H1 (cell line): ENCODE measurements at regions of chr17 and their contacts with region 1.

Region 1: GRCh38 chr17:59440784-59441441 is 109.5 kb downstream of the YPEL2 start:
- DNase-seq: peak; percentile 69 to 90
- H3K4me3 ChIP-seq: no peak overlapping the region
- H3K27ac ChIP-seq: no peak overlapping the region
- H3K4me1 ChIP-seq: peaks cover 0 to 5% (median 0%) of the 10 kb centered on the region in 4 experiments; a peak in 2 of 7 replicates
- H3K27me3 ChIP-seq: no peaks in the 10 kb centered on the region
- CTCF ChIP-seq: peak; percentile 47 to 94 (median 90)
- EP300 ChIP-seq: no peak
- POLR2A ChIP-seq: no peak
- RAD21 ChIP-seq: peak; percentile 89 to 96

Region 2: GRCh38 chr17:59331129-59331928 is 109.6 kb before region 1 on chr17 and contains the start of gene YPEL2:
- CTCF ChIA-PET with region 1: interaction called, 299 read pairs
- POLR2A ChIA-PET with region 1: no interaction called
- DNase-seq: peak; percentile 84 to 97
- H3K4me3 ChIP-seq: peak within 1 kb of the TSS; percentile 63 to 79 (median 66)
- H3K27ac ChIP-seq: no peak within 1 kb of the TSS
- H3K4me1 ChIP-seq: peaks cover 10 to 19% (median 14%) of the 10 kb centered on the region in 4 experiments; a peak in 6 of 7 replicates
- H3K27me3 ChIP-seq: peaks cover 1 to 22% (median 14%) of the 10 kb centered on the region in 4 experiments; a peak in 6 of 7 replicates
- CTCF ChIP-seq: no peak
- EP300 ChIP-seq: no peak
- POLR2A ChIP-seq: no peak
- RAD21 ChIP-seq: no peak
- total RNA-seq, gene YPEL2: 3.2 and 3.5 TPM in 2 replicates

Region 3: DNA sequence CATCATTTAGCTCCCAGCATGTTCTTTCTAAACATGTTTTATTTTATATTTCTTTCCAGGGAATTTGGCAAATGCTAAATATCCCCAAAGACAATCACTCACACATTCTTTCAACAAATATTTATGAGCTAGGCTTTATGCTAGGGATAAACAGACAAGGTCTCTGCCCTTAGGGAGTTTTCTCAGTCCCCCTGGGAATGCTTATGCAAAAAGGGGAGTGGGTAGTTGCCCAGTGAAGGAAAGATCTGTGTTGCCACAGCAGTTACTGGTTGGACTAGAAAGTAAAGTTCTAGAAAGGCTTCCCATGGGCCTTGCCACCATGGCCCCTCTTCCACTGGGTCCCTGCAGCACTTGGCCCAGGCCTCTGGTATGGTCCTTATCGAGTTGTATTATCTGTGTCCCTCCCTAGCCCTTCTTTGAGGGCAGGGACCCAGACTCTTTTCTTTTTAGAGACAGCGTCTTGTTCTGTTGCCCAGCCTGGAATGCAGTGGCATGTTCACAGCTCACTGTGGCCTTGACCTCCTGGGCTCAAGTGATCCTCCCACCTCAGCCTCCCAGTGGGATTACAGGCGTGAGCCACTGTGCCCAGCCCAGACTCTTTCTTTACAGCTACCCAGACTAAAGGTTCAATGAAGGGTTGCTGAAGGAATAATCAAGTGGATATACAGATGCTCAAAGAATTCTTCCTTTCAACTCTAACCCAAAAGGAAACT is 31.4 kb before region 1 on chr17:
- CTCF ChIA-PET with region 1: no interaction called
- POLR2A ChIA-PET with region 1: no interaction called
- DNase-seq: no peak
- H3K4me3 ChIP-seq: no peak overlapping the region
- H3K27ac ChIP-seq: no peak overlapping the region
- H3K4me1 ChIP-seq: no peaks in the 10 kb centered on the region
- H3K27me3 ChIP-seq: no peaks in the 10 kb centered on the region
- CTCF ChIP-seq: no peak
- EP300 ChIP-seq: no peak
- POLR2A ChIP-seq: no peak
- RAD21 ChIP-seq: no peak

Region 4: GRCh38 chr17:59428896-59429485 is 11.9 kb before region 1 on chr17:
- CTCF ChIA-PET with region 1: interaction called, 22 read pairs
- POLR2A ChIA-PET with region 1: interaction called, 6 read pairs
- DNase-seq: no peak
- H3K4me3 ChIP-seq: no peak overlapping the region
- H3K27ac ChIP-seq: no peak overlapping the region
- H3K4me1 ChIP-seq: peaks cover 0 to 9% (median 6%) of the 10 kb centered on the region in 4 experiments; a peak in 3 of 7 replicates
- H3K27me3 ChIP-seq: no peaks in the 10 kb centered on the region
- CTCF ChIP-seq: no peak
- EP300 ChIP-seq: no peak
- POLR2A ChIP-seq: no peak
- RAD21 ChIP-seq: no peak

Region 5: DNA sequence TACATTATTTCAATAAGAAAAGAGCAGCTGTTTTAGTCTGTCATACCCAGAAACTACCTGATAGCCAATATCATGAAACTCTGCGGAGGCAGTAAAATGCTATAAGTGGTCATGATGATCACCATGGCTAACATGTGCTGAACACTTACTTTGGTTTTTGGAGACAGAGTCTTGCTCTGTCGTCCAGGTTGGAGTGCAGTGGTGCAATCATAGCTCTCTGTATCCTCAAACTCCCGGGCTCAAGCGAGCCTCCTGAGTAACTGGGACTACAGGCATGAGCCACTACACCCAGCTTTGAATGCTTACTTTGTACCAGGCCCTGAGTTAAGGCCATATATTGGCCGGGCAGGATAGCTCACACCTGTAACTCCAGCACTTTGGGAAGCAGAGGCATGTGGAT is 23.3 kb after region 1 on chr17:
- CTCF ChIA-PET with region 1: interaction called, 10 read pairs
- POLR2A ChIA-PET with region 1: no interaction called
- DNase-seq: no peak
- H3K4me3 ChIP-seq: no peak overlapping the region
- H3K27ac ChIP-seq: no peak overlapping the region
- H3K4me1 ChIP-seq: no peaks in the 10 kb centered on the region
- H3K27me3 ChIP-seq: no peaks in the 10 kb centered on the region
- CTCF ChIP-seq: no peak
- EP300 ChIP-seq: no peak
- POLR2A ChIP-seq: no peak
- RAD21 ChIP-seq: no peak

Region 6: DNA sequence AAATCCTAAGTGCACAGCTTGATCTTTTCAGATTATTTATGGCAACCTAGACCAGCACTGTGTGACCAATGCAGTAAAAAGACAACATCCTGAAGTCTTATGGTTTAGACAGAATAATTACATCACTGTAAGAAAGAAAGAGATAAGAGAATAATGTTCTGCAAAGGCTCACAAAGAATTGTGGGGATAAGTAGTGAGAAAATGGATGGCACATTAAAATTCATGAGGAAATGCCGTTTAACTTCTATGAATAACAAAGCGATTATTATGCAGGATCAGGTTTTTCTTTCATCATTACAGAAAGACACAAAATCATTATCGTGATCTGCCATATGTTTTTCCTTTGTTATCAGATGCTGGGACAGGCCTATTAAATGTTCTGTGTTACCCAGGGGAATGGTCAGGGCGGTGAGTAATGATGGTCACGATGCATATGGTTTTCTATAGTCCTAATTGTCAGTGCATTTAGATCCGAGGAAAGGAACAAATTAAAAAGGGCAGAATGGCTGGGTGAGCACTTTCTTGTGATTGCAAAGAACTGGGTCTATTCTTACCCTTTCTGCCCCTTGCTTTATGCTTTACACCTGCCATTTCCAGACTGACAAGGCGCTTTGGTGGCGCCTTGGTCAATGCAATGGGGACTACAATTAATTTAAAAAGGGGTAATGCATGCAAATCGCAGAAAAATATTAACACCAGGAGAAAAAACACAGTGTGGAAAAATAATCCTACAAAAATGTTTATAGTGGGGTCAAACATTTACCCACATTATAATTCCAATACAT is 106.4 kb after region 1 on chr17:
- CTCF ChIA-PET with region 1: no interaction called
- POLR2A ChIA-PET with region 1: no interaction called
- DNase-seq: no peak
- H3K4me3 ChIP-seq: no peak overlapping the region
- H3K27ac ChIP-seq: no peak overlapping the region
- H3K4me1 ChIP-seq: peaks cover 0 to 3% (median 1%) of the 10 kb centered on the region in 4 experiments; a peak in 1 of 7 replicates
- H3K27me3 ChIP-seq: no peaks in the 10 kb centered on the region
- CTCF ChIP-seq: no peak
- EP300 ChIP-seq: no peak
- POLR2A ChIP-seq: no peak
- RAD21 ChIP-seq: no peak